Right lobe of liver (tissue), 6 donors: ENCODE measurements at regions of chr1 and their contacts with region 1.

Region 1: DNA sequence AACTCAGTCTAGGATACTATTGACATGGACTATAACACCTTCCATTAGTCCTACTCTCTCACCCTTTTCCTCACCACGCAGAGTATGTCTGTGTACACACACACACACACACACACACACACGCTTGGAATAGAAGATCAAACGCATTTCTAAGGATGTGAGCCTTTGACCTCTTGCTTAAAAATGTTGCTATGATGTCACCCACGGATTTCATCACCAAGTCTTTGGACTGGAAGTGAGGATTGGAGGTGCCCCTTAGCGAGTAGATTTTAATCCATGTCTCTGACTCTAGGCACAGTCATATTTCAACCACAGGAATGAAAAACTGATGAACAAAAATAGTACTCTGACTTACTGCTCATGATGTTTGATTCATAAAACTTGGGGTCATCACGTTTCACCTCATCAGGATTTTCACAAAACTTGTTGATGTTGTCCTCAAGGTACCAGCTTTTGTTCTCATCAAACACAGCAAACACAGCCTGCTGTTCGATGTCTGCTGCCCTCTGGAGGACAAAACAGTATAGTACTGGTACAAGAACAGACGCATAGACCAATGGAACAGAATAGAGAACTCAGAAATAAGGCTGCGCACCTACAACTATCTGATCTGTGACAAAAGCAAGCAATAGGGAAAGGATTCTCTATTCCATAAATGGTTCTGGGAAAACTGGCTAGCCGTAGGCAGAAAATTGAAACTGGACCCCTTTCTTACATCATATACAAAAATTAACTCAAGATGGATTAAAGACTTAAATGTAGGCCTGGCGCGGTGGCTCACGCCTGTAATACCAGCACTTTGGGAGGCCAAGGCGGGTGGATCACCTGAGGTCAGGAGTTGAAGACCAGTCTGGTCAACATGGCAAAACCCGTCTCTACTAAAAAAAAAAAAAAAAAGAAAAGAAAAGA is 39.9 kb downstream of the F5 start:
- DNase-seq: no peak
- ATAC-seq: peak; percentile 72 to 84 (median 80)
- H3K4me3 ChIP-seq: no peak overlapping the region
- H3K27ac ChIP-seq: peak overlapping the region in 1 of 3 donors; percentile 44
- H3K4me1 ChIP-seq: peaks cover 0 to 3% (median 0%) of the 10 kb centered on the region in 4 donors
- H3K27me3 ChIP-seq: no peaks in the 10 kb centered on the region
- CTCF ChIP-seq: peak; percentile 62 to 74 (median 70)
- POLR2A ChIP-seq: no peak

Region 2: DNA sequence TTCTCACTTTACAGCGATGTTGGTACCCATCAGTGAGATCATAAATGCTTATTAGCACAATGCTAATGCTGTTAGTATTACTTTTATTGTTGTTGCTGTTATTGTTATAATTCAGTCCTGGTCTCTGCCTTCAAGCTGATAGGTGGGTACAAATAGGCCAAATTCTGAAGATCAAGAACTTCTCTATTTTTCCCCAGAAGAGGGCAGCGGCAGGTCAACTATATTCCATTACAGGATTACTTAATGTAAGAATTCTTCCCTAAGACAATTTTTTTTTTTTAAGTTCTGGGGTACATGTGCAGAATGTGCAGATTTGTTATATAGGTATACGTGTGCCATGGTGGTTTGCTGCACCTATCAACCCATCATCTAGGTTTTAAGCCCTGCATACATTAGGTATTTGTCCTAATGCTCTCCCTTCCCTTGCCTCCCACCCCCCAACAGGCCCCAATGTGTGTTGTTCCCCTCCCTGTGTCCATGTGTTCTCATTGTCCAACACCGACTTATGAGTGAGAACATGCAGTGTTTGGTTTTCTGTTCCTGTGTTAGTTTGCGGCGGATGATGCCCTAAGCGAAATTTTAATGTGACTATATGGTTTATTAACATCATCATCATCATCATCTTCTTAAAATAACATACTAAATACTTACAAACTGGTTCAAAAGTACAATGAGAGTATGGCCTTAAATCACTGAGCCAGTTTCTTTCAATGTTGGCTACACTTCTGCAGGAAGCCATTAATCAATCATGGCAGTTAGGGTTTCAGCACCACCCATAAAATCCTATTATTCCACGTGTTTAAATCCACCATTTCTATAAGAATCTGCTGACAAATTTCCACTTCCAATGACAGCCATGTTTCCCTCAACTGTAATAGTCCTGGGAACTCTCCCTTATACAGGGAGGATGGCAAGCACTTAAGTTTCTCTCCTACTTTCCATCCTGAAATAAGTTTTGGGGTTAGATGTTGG is 79.8 kb before region 1 on chr1:
- intact Hi-C with region 1: loop called (anchors 10 kb)
- DNase-seq: no peak
- ATAC-seq: peak; percentile 65 to 74 (median 66)
- H3K4me3 ChIP-seq: no peak overlapping the region
- H3K27ac ChIP-seq: no peak overlapping the region
- H3K4me1 ChIP-seq: no peaks in the 10 kb centered on the region
- H3K27me3 ChIP-seq: no peaks in the 10 kb centered on the region
- CTCF ChIP-seq: peak; percentile 41 to 49 (median 46)
- POLR2A ChIP-seq: no peak

Region 3: GRCh38 chr1:169473352-169473751 is 73.0 kb before region 1 on chr1:
- intact Hi-C with region 1: loop called (anchors 10 kb)
- DNase-seq: no peak
- ATAC-seq: no peak
- H3K4me3 ChIP-seq: no peak overlapping the region
- H3K27ac ChIP-seq: no peak overlapping the region
- H3K4me1 ChIP-seq: no peaks in the 10 kb centered on the region
- H3K27me3 ChIP-seq: no peaks in the 10 kb centered on the region
- CTCF ChIP-seq: no peak
- POLR2A ChIP-seq: no peak